ENCODE measurements at regions of chr16 and their contacts with region 1.

Region 1: DNA sequence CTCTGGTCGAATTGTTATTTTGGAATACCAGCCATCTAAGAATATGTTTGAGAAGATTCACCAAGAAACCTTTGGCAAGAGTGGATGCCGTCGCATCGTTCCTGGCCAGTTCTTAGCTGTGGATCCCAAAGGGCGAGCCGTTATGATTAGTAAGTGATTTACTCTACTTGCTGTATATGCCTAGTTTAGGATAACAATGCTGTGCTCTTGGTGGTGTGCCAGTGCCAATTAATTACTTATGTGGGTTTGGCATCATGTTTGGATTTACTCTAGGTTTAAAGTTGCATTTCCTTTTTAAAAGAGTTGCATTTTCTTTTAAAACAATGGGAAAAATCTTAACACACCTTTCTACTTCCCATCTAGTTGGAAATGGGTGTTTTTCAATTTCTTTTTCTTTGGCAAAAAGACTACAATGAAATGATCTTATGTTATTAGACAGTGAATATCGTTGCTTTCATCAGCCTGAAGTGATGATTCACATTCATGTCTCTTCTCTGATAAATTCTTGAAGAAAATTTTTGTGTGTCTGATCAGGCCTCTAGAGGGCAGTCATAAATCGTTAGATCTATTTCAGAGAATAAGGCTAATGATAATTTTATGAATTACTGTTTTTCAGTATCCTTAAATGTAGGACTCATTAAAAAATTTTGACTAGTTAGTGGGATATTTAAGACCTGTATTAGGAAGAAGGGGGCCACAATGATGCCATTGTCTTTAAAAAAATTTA is 5.6 kb downstream of the SF3B3 start:
- DNase-seq: no peak
- ATAC-seq: no peak
- H3K4me3 ChIP-seq: no peak overlapping the region
- H3K27ac ChIP-seq: no peak overlapping the region
- H3K4me1 ChIP-seq: no peaks in the 10 kb centered on the region
- H3K27me3 ChIP-seq: no peaks in the 10 kb centered on the region

Region 2: GRCh38 chr16:70568601-70569237 is 39.5 kb after region 1 on chr16:
- intact Hi-C with region 1: loop called in 1 of 2 experiments (anchors 5 kb)
- DNase-seq: no peak
- ATAC-seq: no peak
- H3K4me3 ChIP-seq: no peak overlapping the region
- H3K27ac ChIP-seq: no peak overlapping the region
- H3K4me1 ChIP-seq: peaks cover 3% of the 10 kb centered on the region in 2 donors
- H3K27me3 ChIP-seq: no peaks in the 10 kb centered on the region

Measured in aorta (tissue), 5 donors.